CD4-positive, alpha-beta T cell (primary cell): ENCODE measurements at regions of chr15 and their contacts with region 1.

Region 1: GRCh38 chr15:98599909-98600691 is 48.2 kb upstream of the IGF1R start:
- DNase-seq: peak in 13 of 14 experiments; percentile 10 to 58 (median 25)
- ATAC-seq: peak; percentile 85
- H3K4me3 ChIP-seq: peak overlapping the region; percentile 49
- H3K4me3 Mint-ChIP-seq: peak overlapping the region; percentile 88
- H3K27ac ChIP-seq: peak overlapping the region in 1 of 2 donors; percentile 35
- H3K27ac Mint-ChIP-seq: peak overlapping the region; percentile 84
- H3K4me1 ChIP-seq: peaks cover 11% of the 10 kb centered on the region
- H3K4me1 Mint-ChIP-seq: peaks cover 22% of the 10 kb centered on the region
- H3K27me3 ChIP-seq: no peaks in the 10 kb centered on the region
- H3K27me3 Mint-ChIP-seq: peaks cover 4% of the 10 kb centered on the region
- CTCF ChIP-seq: no peak

Region 2: DNA sequence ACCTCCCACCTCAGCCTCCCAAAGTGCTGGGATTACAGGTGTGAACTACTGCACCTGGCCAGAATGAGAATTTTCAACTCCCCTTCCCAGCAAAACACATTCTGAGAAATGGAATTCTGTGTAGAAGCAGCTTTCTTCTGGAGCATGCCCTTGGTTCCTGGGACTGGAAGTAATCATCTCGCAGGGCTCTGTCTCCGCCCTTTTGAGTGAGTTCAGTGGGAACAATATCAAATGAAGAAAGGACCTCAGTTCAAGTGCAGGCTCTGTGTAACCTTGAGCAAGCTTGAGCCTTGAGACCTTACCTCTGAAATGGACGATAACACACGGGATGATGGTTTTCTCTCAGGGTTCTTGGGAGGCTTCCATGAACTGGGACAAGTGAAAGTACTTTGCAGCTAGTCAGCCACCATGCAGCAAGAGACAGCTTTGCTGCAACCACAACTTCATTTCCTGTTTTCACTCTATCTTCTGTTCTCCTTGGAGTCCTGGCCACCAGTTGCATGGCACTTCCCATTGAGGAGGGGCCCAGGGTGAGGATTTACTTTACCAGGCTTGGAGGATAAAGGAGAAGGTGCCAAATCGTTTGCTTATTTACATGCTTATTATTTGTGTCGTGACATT is 12.5 kb after region 1 on chr15:
- CTCF ChIA-PET with region 1: interaction called, 3 read pairs
- POLR2A ChIA-PET with region 1: interaction called, 12 read pairs
- intact Hi-C with region 1: no loop called
- DNase-seq: peak in 3 of 14 experiments; percentile 7 to 20 (median 8)
- ATAC-seq: peak; percentile 44
- H3K4me3 ChIP-seq: no peak overlapping the region
- H3K4me3 Mint-ChIP-seq: peak overlapping the region; percentile 59
- H3K27ac ChIP-seq: no peak overlapping the region
- H3K27ac Mint-ChIP-seq: peak overlapping the region; percentile 69
- H3K4me1 ChIP-seq: peaks cover 8% of the 10 kb centered on the region
- H3K4me1 Mint-ChIP-seq: peaks cover 6% of the 10 kb centered on the region
- H3K27me3 ChIP-seq: no peaks in the 10 kb centered on the region
- H3K27me3 Mint-ChIP-seq: peaks cover 5% of the 10 kb centered on the region
- CTCF ChIP-seq: no peak